ENCODE measurements at regions of chr7 and their contacts with region 1.

Region 1: GRCh38 chr7:129298268-129298893 is 73.6 kb downstream of the AHCYL2 start:
- DNase-seq: peak; percentile 46
- H3K4me3 ChIP-seq: no peak overlapping the region
- H3K27ac ChIP-seq: no peak overlapping the region
- H3K4me1 ChIP-seq: no peaks in the 10 kb centered on the region
- H3K27me3 ChIP-seq: no peaks in the 10 kb centered on the region
- CTCF ChIP-seq: peak; percentile 62 to 71 (median 63)
- EP300 ChIP-seq: no peak
- POLR2A ChIP-seq: no peak

Region 2: DNA sequence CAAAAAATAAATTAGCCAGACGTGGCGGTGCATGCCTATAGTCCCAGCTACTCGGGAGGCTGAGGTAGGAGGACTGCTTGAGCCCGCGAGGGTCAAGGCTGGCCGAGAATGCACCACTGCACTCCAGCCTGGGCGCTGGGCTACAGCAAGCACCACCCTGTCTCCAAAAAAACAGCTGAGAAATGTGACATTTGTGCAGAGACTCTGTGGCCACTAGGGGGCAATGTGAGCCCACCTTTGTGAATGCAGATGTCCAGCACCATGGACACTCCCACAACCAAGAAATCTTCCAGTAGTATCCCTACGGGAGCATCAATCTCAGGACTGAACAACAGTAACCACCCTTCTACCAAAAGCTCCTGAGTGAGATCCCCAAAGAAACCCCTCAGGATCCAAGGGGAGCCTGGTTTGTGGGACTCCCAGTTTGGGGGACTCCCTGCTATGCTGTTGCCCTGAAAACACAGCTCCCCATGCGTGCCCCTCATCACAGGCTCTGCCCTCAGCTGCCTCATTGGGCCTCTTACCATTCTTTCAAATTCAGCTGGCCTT is 79.8 kb before region 1 on chr7:
- in situ Hi-C with region 1: loop called in 1 of 4 experiments (anchors 5 kb)
- intact Hi-C with region 1: no loop called
- DNase-seq: peak; percentile 87
- H3K4me3 ChIP-seq: no peak overlapping the region
- H3K27ac ChIP-seq: no peak overlapping the region
- H3K4me1 ChIP-seq: peaks cover 0 to 3% (median 0%) of the 10 kb centered on the region in 4 donors
- H3K27me3 ChIP-seq: no peaks in the 10 kb centered on the region
- CTCF ChIP-seq: peak; percentile 88 to 94 (median 90)
- EP300 ChIP-seq: no peak
- POLR2A ChIP-seq: no peak

Region 3: GRCh38 chr7:129240119-129240815 is 58.1 kb before region 1 on chr7:
- in situ Hi-C with region 1: no loop called
- intact Hi-C with region 1: no loop called
- DNase-seq: no peak
- H3K4me3 ChIP-seq: no peak overlapping the region
- H3K27ac ChIP-seq: no peak overlapping the region
- H3K4me1 ChIP-seq: peaks cover 0 to 5% (median 0%) of the 10 kb centered on the region in 4 donors
- H3K27me3 ChIP-seq: no peaks in the 10 kb centered on the region
- CTCF ChIP-seq: no peak
- EP300 ChIP-seq: no peak
- POLR2A ChIP-seq: no peak